Naive thymus-derived CD4-positive, alpha-beta T cell (primary cell): ENCODE measurements at regions of chr13 and their contacts with region 1.

Region 1: GRCh38 chr13:99004978-99005377 is 27.1 kb upstream of the DOCK9 start:
- DNase-seq: peak in 1 of 9 donors; percentile 24
- ATAC-seq: no peak
- H3K4me3 ChIP-seq: no peak overlapping the region
- H3K4me3 Mint-ChIP-seq: peak overlapping the region in 6 of 10 donors; percentile 4 to 50 (median 22)
- H3K27ac ChIP-seq: no peak overlapping the region
- H3K27ac Mint-ChIP-seq: peak overlapping the region in 4 of 9 donors; percentile 2 to 75 (median 38)
- H3K4me1 ChIP-seq: peaks cover 6 to 61% of the 10 kb centered on the region in 2 donors
- H3K4me1 Mint-ChIP-seq: peaks cover 41 to 89% (median 82%) of the 10 kb centered on the region in 7 donors
- H3K27me3 ChIP-seq: no peaks in the 10 kb centered on the region
- H3K27me3 Mint-ChIP-seq: no peaks in the 10 kb centered on the region

Region 2: DNA sequence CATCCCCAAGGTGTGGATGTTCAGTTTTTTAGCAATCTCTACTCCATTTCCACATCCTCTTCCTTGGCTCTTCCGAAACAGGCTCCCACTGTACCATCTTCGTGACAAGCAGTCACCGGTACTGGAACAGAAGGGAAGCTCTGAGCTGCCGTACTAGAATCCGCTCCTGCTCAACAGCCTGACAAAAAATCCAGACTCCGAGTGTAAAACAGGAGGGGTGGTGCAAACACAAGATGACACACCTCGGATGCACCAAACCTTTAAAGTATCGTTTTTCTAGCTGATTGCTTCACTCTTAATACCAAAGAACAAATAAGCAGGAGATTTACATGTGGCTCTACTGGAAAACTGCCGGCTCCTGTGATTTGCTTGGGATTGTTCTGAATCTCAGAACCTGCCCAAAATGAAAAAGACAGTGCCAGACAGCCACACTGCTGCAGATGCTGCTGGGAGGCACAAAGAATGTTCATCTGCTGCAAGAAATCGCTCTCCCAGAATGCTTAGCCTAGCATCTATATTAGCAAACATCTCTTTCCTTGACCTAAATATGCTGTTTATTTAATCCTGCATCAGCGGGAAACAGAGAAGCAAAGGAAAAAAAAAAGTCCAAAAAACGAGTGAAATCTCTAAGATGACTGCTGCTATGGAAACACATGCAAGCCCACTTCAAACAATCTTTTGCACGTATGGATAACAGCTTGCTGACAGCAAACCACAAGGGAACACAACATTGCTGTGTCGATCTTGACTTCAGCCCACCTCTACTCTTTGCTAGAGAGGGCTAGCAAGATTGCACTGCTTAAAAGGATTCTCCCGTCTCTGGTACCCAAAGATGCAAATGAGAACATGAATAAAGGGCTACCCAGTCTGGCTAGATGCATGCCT is 10.9 kb after region 1 on chr13:
- CTCF ChIA-PET with region 1: interaction called, 3 read pairs
- POLR2A ChIA-PET with region 1: interaction called, 11 read pairs
- intact Hi-C with region 1: loop called in 1 of 2 experiments (anchors 1 kb)
- DNase-seq: peak in 6 of 9 donors; percentile 44 to 64 (median 51)
- ATAC-seq: peak; percentile 78
- H3K4me3 ChIP-seq: no peak overlapping the region
- H3K4me3 Mint-ChIP-seq: peak overlapping the region in 9 of 10 donors; percentile 3 to 68 (median 59)
- H3K27ac ChIP-seq: no peak overlapping the region
- H3K27ac Mint-ChIP-seq: peak overlapping the region in 8 of 9 donors; percentile 11 to 92 (median 60)
- H3K4me1 ChIP-seq: peaks cover 13 to 27% of the 10 kb centered on the region in 2 donors
- H3K4me1 Mint-ChIP-seq: peaks cover 35 to 88% (median 78%) of the 10 kb centered on the region in 7 donors
- H3K27me3 ChIP-seq: no peaks in the 10 kb centered on the region
- H3K27me3 Mint-ChIP-seq: peaks cover 0 to 4% (median 0%) of the 10 kb centered on the region in 5 donors

Region 3: GRCh38 chr13:99980201-99980823 is 975.3 kb after region 1 on chr13:
- CTCF ChIA-PET with region 1: no interaction called
- POLR2A ChIA-PET with region 1: no interaction called
- intact Hi-C with region 1: no loop called
- DNase-seq: peak in 6 of 9 donors; percentile 44 to 64 (median 55)
- ATAC-seq: peak; percentile 78
- H3K4me3 ChIP-seq: no peak overlapping the region
- H3K4me3 Mint-ChIP-seq: peak overlapping the region in 4 of 10 donors; percentile 42 to 68 (median 59)
- H3K27ac ChIP-seq: no peak overlapping the region
- H3K27ac Mint-ChIP-seq: no peak overlapping the region
- H3K4me1 ChIP-seq: peaks cover 8 to 18% of the 10 kb centered on the region in 2 donors
- H3K4me1 Mint-ChIP-seq: peaks cover 0 to 35% (median 23%) of the 10 kb centered on the region in 7 donors
- H3K27me3 ChIP-seq: peaks cover 22 to 66% of the 10 kb centered on the region in 2 donors
- H3K27me3 Mint-ChIP-seq: peaks cover 51 to 71% (median 54%) of the 10 kb centered on the region in 5 donors